GM13977 (cell line): ENCODE measurements at regions of chr12 and their contacts with region 1.

Region 1: GRCh38 chr12:109264095-109264942 is 44.8 kb downstream of the FOXN4 start:
- DNase-seq: peak; percentile 83
- CTCF ChIP-seq: peak; percentile 81

Region 2: DNA sequence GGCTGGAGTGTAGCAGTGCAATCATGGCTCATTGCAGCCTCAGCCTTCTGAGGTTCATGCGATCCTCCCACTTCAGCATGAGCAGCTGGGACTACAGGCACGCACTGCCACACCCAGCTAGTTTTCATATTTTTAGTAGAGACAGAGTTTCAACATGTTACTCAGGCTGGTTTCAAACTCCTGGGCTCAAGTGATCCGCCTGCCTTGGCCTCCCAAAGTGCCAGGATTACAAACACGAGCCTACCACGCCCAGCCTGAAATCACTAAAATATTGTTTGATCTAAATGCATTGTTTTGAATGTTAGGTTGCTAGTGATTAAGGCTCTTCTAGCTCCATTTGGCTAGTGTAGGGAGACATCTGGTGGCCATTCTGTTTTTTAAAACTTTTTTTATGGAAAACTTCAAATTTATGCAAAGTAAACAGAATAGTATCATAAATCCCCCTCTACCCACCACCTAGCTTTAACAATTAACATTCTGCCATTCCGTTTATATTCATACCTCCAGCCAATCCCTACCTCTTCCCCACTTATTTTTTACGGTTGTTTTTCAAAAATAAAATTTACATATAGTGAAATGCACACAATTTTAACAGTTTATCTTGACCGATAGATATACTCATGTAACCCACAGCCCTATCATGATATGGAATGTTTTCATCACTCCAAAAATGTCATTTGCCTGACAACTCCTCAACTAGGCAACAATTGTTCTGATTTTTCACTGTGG is 121.2 kb after region 1 on chr12:
- in situ Hi-C with region 1: loop called (anchors 10 kb)
- DNase-seq: peak; percentile 37
- CTCF ChIP-seq: peak; percentile 55